Sciatic nerve (tissue), 2 donors: ENCODE measurements at regions of chr2 and their contacts with region 1.

Region 1: DNA sequence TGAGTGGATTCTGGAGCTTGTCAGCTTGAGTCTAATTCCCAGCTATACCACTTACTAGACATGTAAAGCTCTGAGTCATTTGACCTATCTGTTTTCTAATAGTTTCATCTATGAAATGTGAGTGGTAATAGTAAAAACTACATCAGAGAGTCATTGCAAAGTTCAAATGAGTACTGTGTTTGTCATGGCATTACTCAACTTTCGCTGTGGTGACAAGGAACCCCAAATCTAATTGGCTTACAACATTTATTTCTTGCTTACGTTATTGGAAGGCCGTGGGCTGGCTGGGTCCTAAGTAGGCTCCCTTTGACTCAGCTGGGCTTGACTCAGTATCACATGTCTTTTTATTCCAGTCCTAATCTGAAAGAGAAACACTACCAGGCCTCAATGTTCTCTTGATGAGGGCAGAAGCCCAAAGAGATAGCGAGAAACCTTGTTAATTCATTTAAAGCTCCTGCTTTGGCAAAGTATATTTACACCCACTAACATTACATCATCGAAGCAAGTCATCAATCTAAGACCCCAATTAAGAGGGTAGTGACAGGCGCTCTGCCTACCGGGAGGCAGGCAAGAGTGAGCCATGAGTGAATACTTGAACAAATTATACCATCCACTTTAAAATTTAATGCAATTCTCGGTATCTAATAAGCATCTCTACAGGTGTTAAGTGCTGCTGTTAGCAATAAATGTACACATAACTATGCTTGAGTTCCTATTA is 431.8 kb upstream of the SPHKAP start:
- DNase-seq: no peak
- ATAC-seq: no peak

Region 2: GRCh38 chr2:227411320-227411989 is 1201.8 kb before region 1 on chr2:
- intact Hi-C with region 1: loop called (anchors 5 kb)
- DNase-seq: no peak
- ATAC-seq: no peak

Region 3: DNA sequence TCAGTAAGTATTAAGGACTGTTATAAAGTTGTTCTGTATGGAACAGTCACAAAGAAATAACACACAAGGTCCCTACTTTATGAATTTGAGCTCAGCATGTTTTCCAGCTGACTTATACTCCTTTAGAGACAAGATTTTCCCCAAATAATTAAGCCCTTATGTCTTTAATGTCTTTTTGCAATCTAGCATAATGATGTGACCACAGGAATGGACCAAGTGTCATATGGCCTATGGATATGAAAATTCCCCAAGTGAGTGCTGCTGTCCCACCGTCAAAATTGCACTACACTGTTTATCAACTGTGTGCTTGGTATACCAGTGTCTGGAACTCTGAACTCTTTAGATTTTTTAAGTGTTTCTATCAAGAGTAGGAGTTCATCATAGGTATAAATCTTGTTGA is 288.2 kb after region 1 on chr2:
- intact Hi-C with region 1: no loop called
- DNase-seq: no peak
- ATAC-seq: no peak